Lower leg skin (tissue), 4 donors: ENCODE measurements at regions of chr6 and their contacts with region 1.

Region 1: GRCh38 chr6:158793432-158793831 is 25.7 kb downstream of the EZR start:
- DNase-seq: peak in 1 of 2 donors; percentile 6
- H3K4me3 ChIP-seq: no peak overlapping the region
- CTCF ChIP-seq: no peak
- POLR2A ChIP-seq: no peak

Region 2: DNA sequence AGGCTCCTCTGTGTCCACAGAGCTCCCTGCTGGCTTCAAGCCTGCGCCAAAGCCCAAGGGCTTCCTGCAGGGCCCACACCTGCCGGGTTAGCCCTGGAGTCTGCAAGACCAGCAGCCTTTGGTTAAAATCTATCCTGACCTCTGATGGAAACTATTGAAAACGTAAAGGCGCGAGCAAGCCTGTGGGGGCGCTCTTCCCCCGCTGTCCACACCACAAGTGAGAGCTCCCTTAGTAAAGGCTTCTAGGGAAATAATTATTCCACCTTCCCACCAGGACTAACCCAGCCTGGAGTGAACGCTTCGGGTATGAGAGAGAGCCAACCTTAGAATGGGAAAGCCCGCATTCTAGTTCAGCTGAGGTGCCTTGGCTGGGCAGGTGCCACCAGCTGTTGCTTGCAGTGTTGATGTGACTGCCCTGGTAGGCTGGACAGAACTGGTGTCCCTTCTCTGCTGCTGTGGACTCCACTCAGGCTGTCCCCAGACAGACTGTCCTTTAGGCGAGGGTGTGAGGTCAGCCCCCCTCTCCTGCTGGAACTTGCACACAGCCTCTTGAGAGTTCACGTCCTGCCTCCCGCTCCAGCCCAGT is 74.9 kb before region 1 on chr6:
- intact Hi-C with region 1: loop called (anchors 10 kb)
- DNase-seq: peak in 1 of 2 donors; percentile 61
- H3K4me3 ChIP-seq: no peak overlapping the region
- CTCF ChIP-seq: no peak
- POLR2A ChIP-seq: no peak